Ascending aorta (tissue), 2 donors: ENCODE measurements at regions of chr18 and their contacts with region 1.

Region 1: GRCh38 chr18:1998121-1998520 is 573.2 kb downstream of the METTL4 start:
- DNase-seq: no peak
- H3K4me3 ChIP-seq: no peak overlapping the region
- H3K27ac ChIP-seq: no peak overlapping the region
- H3K4me1 ChIP-seq: no peaks in the 10 kb centered on the region
- H3K27me3 ChIP-seq: no peaks in the 10 kb centered on the region
- CTCF ChIP-seq: no peak

Region 2: DNA sequence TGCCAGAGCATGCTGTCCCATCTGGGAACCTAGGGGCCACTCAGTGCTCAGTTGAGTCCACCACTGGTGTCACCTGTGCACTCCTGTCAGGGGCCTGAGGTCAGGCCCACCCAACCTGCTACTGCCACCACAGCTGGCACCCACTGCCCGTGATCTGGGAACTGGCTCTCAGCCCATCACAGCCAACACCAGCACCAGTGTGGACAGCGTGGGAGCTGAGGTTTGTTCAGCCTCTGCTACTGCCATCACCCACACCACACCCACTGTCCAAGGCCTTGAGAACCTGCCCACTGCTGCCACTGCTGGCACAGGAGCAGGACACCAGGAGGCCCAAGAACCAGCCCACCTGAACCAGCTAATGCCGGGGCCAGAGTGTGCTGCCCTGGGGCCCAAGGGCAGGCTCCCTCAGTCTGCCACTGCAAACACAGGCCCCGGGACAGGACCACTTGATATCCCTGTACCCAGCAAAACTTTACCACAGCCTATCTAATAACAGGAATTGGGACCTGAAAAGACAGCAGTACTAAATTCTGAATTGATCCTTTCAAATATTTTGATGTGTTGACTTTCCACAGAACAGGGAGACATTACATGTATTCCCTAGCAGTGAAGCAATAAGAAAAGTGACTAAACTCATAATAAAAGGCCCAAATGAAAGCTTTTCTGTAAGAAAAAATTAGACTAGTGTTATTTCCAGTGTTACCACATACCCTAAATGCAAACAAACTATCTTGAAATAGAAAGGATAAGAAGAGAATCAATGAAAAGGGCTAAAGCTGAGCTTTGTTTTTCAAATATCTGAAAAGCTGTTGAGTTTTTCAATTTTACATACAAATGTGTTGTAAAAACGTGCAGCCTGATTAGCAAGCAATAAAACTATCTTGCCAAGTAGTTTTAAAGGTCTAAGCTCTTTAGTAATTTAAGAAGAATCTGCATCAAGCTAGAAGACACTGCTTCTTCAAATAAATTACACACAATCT is 67.5 kb before region 1 on chr18:
- intact Hi-C with region 1: loop called (anchors 10 kb)
- DNase-seq: no peak
- H3K4me3 ChIP-seq: no peak overlapping the region
- H3K27ac ChIP-seq: no peak overlapping the region
- H3K4me1 ChIP-seq: no peaks in the 10 kb centered on the region
- H3K27me3 ChIP-seq: no peaks in the 10 kb centered on the region
- CTCF ChIP-seq: no peak